Endothelial cell of umbilical vein (primary cell): ENCODE measurements at regions of chr12 and their contacts with region 1.

Region 1: DNA sequence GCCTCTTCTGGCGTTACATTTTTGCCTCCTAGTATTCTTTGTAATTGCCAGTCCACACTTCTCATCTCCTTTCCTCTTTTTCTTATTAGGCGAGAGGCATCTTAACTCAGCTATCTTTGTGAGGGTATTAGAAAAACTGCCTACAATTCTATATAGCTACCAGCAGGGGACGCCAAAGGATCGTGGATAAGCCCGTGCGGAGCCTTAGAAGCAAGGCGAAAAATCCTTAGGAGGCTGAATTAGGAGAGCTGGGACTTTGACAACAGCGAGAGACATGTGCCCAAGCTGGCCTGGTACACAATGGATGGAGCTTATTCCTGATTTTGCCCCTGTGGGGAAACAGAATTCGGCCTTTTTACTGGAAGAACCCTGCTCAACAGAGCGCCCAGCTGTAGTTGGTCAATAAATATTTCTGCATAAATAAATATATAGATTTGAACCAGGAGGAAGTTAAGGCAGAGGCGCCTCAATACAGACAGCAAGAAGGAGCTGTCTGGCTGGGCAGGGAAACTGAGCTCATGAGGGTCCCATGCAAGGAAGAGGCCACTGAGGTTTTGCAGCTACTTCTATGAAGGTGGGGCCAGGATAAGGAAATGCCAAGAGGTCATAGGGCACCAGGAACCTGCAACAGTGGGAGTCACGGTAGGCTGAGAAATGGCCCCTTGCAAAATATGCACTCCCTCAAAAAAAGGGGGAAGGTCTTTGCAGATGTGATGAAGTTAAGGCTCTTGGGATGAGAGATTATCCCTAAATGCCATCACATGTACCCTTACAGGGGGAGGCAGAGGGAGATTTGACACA is 14.6 kb upstream of the RBM19 start:
- DNase-seq: peak; percentile 66
- H3K4me3 ChIP-seq: no peak overlapping the region
- H3K27ac ChIP-seq: no peak overlapping the region
- H3K4me1 ChIP-seq: no peaks in the 10 kb centered on the region
- H3K27me3 ChIP-seq: no peaks in the 10 kb centered on the region
- CTCF ChIP-seq: peak; percentile 83 to 86
- POLR2A ChIP-seq: no peak

Region 2: GRCh38 chr12:114476159-114476558 is 495.4 kb after region 1 on chr12:
- CTCF ChIA-PET with region 1: no interaction called
- POLR2A ChIA-PET with region 1: no interaction called
- dilution Hi-C with region 1: no loop called
- intact Hi-C with region 1: loop called (anchors 1 kb)
- DNase-seq: no peak
- H3K4me3 ChIP-seq: no peak overlapping the region
- H3K27ac ChIP-seq: no peak overlapping the region
- H3K4me1 ChIP-seq: no peaks in the 10 kb centered on the region
- H3K27me3 ChIP-seq: peaks cover 10 to 25% of the 10 kb centered on the region in 2 experiments
- CTCF ChIP-seq: no peak
- POLR2A ChIP-seq: no peak

Region 3: DNA sequence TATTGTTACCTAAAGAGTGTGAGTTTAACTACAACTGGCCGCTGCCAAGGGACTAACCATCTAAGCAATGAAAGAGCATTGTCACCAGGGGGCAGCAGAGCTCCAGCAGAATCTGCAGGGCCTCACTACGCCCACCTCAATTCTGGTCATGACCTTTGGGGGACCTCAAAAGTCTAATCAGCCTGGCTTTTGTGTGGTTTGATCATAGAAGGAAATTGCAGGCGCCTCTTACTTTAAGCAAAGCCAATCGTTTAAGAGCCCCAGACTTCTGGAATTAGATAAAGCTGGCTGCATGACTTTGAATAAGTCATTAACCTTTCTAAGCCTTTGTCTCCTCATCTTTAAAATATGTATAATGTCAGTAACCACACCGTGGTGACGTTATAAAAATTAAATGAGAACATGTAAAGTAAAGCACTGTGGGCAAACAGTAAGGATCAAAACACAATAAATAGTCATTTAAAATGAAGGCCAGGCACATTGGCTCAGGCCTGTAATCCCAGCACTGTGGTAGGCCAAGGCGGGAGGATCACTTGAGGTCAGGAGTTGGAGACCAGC is 644.6 kb after region 1 on chr12:
- CTCF ChIA-PET with region 1: interaction called, 12 read pairs
- POLR2A ChIA-PET with region 1: no interaction called
- dilution Hi-C with region 1: no loop called
- intact Hi-C with region 1: no loop called
- DNase-seq: peak; percentile 29
- H3K4me3 ChIP-seq: no peak overlapping the region
- H3K27ac ChIP-seq: no peak overlapping the region
- H3K4me1 ChIP-seq: no peaks in the 10 kb centered on the region
- H3K27me3 ChIP-seq: no peaks in the 10 kb centered on the region
- CTCF ChIP-seq: peak; percentile 57 to 63
- POLR2A ChIP-seq: no peak

Region 4: DNA sequence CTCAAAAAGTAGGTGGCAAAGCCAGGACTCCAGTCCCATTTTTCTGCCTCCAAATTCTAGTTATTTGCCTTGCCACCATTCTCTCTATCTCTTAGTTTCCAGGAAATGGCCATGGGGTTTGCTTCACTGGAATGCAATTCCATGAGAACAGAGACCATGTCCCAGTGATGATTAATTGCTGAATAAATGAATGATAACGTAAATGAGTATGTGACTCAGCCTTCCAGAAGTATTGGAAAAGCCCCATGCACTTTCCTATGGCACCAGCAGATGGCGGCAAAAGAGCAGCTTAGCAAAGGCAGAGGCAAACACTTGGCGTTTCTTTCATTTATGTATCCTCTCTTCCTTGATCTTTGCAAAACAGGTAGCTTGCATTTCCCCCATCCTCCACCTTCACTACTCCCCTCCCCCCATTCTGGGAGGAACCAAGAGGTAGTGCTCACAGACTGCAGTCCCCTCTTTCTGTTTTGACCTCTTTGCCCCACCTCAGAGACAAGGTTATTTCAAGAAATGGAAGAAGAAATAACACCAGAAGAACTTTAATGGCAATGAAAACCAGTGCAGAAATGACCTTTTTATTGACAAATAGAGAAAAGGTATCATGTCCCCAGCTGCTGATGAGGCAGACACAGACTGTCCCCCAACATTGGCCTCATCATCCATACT is 681.9 kb after region 1 on chr12:
- CTCF ChIA-PET with region 1: interaction called, 15 read pairs
- POLR2A ChIA-PET with region 1: no interaction called
- dilution Hi-C with region 1: no loop called
- intact Hi-C with region 1: loop called (anchors 1 kb)
- DNase-seq: peak; percentile 82
- H3K4me3 ChIP-seq: no peak overlapping the region
- H3K27ac ChIP-seq: no peak overlapping the region
- H3K4me1 ChIP-seq: no peaks in the 10 kb centered on the region
- H3K27me3 ChIP-seq: peaks cover 42 to 44% of the 10 kb centered on the region in 2 experiments
- CTCF ChIP-seq: peak; percentile 77 to 89
- POLR2A ChIP-seq: no peak

Region 5: DNA sequence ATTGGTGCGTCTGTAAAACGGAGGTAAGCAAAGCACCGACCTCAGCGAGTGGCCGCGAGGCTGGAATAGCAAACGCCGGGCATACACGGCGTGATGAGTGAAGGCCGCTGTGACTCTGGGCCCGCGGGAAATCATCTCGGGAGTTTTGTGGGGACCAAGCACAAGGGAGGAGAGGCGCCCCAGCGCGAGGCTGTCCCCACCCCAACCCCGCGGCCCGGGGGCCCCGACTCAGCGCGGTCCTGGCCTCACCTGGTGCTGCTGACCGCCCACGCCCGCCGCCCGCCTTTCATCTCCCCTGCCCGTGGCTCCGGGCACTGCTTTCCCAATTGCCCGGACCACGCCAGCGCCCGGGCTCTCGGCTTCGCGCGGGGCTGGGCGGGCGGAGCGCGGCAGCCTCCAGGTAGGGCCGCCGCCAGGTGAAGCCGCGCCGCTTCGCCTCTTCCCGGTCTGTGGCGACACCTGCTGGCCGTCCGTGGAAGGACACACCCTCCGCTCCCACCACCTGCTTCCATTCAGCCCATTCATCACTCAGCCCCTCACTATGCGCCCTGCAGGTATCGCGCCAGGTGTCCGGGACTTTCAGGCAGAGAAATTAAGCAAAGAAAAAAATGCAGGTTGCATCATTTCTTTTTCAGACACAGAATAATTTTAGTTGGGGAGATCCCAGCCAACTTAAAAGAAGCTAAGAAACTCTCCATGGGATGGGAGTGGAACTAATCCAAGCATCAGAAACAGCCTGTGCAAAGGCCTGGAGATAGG is 1936.4 kb after region 1 on chr12:
- CTCF ChIA-PET with region 1: interaction called, 183 read pairs
- POLR2A ChIA-PET with region 1: no interaction called
- dilution Hi-C with region 1: no loop called
- intact Hi-C with region 1: loop called (anchors 1 kb)
- DNase-seq: peak; percentile 5
- H3K4me3 ChIP-seq: no peak overlapping the region
- H3K27ac ChIP-seq: no peak overlapping the region
- H3K4me1 ChIP-seq: no peaks in the 10 kb centered on the region
- H3K27me3 ChIP-seq: peaks cover 0 to 2% of the 10 kb centered on the region in 2 experiments
- CTCF ChIP-seq: peak; percentile 77 to 89
- POLR2A ChIP-seq: no peak

Region 6: GRCh38 chr12:115973968-115974724 is 1993.4 kb after region 1 on chr12:
- CTCF ChIA-PET with region 1: interaction called, 13 read pairs
- POLR2A ChIA-PET with region 1: no interaction called
- dilution Hi-C with region 1: no loop called
- intact Hi-C with region 1: no loop called
- DNase-seq: peak; percentile 58
- H3K4me3 ChIP-seq: no peak overlapping the region
- H3K27ac ChIP-seq: peak overlapping the region; percentile 17
- H3K4me1 ChIP-seq: peaks cover 20% of the 10 kb centered on the region
- H3K27me3 ChIP-seq: no peaks in the 10 kb centered on the region
- CTCF ChIP-seq: no peak
- POLR2A ChIP-seq: no peak